ENCODE measurements at regions of chr5 and their contacts with region 1.

Region 1: DNA sequence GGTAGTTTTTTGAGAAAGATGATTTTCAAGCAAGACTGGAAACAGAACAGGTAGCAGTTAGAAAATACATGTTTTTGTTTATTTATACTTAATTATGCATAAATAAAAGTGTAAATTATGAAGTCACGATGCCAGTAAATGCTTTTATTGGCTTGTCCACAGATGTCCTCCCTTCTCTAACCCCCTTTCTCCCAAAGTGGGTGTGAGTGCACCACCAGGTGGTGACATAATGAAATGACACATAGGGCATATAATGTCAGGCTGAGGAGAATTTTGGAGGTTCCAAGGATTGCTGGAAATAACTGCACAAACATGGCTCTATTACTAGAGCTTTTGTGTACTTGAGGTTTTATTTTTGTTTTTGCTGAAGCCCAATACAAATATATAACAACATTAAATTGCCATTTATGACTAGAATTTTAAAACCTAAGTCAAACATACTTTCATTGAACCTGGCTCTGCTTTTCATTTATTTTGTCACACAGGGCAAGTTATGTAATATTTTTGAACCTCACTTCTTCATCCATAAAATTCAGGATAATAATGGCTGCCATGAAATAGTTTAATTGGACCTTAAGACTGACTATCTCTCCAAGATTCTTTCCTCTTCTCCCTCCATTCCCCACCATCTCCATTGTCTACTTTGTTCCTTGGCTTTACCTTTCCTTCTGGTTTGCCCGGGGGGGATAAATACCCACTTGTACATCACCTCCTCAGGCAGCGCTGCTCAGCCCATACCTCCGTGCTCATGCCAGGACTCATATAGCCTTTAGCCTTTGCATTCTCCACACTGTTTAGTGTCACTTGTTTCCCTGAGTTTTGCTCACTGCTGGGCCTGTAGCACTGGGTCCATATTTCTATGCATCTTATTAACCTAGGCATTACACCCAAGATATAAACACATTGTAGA is 168.8 kb downstream of the PDE4D start:
- DNase-seq: peak; percentile 47
- H3K4me3 Mint-ChIP-seq: no peak overlapping the region
- H3K27ac Mint-ChIP-seq: no peak overlapping the region
- H3K4me1 Mint-ChIP-seq: peaks cover 3% of the 10 kb centered on the region
- H3K27me3 Mint-ChIP-seq: peaks cover 4% of the 10 kb centered on the region

Region 2: GRCh38 chr5:59445741-59446140 is 279.0 kb before region 1 on chr5:
- CTCF ChIA-PET with region 1: no interaction called
- intact Hi-C with region 1: no loop called
- DNase-seq: no peak
- H3K4me3 Mint-ChIP-seq: no peak overlapping the region
- H3K27ac Mint-ChIP-seq: no peak overlapping the region
- H3K4me1 Mint-ChIP-seq: no peaks in the 10 kb centered on the region
- H3K27me3 Mint-ChIP-seq: peaks cover 3% of the 10 kb centered on the region

Region 3: GRCh38 chr5:59506285-59506877 is 218.4 kb before region 1 on chr5:
- CTCF ChIA-PET with region 1: no interaction called
- intact Hi-C with region 1: loop called (anchors 1 kb)
- DNase-seq: no peak
- H3K4me3 Mint-ChIP-seq: no peak overlapping the region
- H3K27ac Mint-ChIP-seq: no peak overlapping the region
- H3K4me1 Mint-ChIP-seq: no peaks in the 10 kb centered on the region
- H3K27me3 Mint-ChIP-seq: no peaks in the 10 kb centered on the region

Region 4: DNA sequence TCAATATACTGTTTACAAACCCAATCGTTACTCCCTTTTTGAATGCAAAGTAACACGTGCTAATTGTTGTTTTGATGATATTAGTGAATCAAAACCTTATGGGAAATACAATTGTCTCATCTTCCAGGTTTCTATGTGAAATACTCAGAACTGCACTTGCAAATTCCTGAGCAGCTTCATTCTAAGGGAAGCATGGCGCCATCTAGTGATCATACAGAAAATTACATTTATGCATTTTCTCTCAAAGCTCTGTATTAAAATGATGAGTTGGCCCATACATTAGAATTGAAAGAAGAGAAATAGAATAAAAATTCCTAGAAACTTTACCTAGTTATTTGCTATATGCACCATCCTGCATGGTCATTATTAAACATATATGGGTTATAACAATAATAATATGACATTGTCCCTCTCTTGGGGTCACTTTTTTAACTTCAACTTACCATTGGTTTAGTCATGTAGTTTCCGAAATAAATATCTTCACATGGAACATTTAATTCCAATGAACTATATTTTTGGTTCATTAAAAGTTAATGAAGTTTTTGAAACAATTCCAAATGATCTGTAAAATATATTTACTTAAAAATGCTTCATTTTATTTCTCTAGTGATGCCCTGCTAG is 51.2 kb before region 1 on chr5:
- CTCF ChIA-PET with region 1: no interaction called
- intact Hi-C with region 1: loop called (anchors 1 kb)
- DNase-seq: no peak
- H3K4me3 Mint-ChIP-seq: no peak overlapping the region
- H3K27ac Mint-ChIP-seq: no peak overlapping the region
- H3K4me1 Mint-ChIP-seq: no peaks in the 10 kb centered on the region
- H3K27me3 Mint-ChIP-seq: no peaks in the 10 kb centered on the region

Region 5: GRCh38 chr5:59745422-59745863 is 20.7 kb after region 1 on chr5:
- CTCF ChIA-PET with region 1: interaction called, 3 read pairs
- intact Hi-C with region 1: loop called (anchors 2 kb)
- DNase-seq: no peak
- H3K4me3 Mint-ChIP-seq: no peak overlapping the region
- H3K27ac Mint-ChIP-seq: no peak overlapping the region
- H3K4me1 Mint-ChIP-seq: no peaks in the 10 kb centered on the region
- H3K27me3 Mint-ChIP-seq: no peaks in the 10 kb centered on the region